ENCODE measurements at regions of chr6 and their contacts with region 1.

Region 1: DNA sequence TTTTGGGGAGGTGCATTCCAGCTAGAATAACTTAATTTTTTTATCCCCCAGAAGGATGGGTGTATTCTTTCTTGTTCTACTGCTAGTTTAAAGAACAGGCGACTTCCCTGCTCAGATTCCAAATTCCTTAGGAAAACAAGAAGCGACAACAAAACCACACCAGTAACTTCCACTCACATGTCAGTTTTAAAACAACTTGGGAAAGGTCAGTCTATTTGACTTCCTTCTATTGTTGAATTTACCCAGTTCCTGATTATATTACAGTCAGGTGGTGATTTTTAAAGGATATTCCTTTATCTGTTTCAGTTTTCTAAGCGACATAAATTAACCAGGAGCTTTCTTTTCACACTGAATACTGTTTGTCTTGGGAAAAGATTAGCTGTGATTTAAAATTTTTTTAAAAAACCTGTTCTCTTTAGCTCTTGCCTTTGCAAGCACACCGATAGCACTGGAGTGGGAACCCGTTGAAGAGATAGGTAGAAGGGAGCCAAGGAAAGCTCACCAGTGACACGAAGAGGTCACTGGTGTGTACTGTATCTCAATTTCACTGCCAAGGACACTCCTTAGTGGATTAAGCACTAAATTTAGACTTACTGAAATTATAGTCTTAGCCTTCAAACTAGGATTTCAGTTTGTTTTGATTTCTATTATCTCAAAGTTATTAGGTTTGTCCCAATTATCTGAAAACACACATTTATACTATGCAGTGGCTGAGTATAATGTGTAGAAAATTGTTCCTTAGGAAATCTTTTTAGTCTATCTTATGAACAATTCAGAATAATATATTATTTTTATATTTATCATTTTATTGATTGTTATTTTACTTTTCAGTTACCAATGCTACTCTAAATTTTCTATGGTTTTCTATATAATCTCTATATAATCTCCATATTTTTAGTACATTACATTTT is 22.3 kb downstream of the MARCKS start:
- DNase-seq: peak in 1 of 2 donors; percentile 54
- ATAC-seq: peak; percentile 91 to 100 (median 98)
- H3K4me3 ChIP-seq: peak overlapping the region in 5 of 10 donors; percentile 1 to 39 (median 14)
- H3K27ac ChIP-seq: peak overlapping the region in 8 of 10 donors; percentile 3 to 64 (median 38)
- H3K4me1 ChIP-seq: peaks cover 0 to 18% (median 7%) of the 10 kb centered on the region in 9 donors
- H3K27me3 ChIP-seq: no peaks in the 10 kb centered on the region
- CTCF ChIP-seq: peak; percentile 45 to 84 (median 72)

Region 2: DNA sequence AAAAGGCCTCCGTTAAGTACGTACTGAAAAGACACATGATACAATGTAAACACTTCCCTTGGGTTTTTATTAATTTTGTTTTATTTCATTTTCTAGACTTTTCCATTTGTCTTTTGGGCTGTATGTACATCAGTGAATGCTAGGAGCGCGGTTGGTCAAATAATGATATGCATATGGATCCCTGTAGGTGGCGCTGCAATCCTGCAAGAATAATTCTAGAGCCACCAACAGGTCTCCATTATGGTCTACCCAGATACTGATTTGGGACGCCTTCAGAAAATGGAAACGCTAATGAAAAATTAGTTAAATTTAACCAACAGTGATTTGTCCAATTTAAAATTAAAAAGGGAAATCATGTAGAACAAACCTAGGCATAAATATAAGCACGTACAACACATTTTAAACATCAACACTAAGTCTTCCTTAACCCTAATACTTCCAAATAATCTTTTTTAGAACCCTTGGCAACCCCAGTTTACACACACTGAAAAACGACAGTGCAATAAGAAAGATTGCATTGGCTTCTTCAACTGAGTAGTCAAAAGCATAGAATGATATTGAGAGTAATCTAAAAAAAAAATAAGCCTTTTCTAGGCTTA is 1098.8 kb before region 1 on chr6:
- intact Hi-C with region 1: loop called in 1 of 10 experiments (anchors 10 kb)
- DNase-seq: peak; percentile 20 to 83
- ATAC-seq: peak in 7 of 8 donors; percentile 81 to 96 (median 91)
- H3K4me3 ChIP-seq: no peak overlapping the region
- H3K27ac ChIP-seq: no peak overlapping the region
- H3K4me1 ChIP-seq: peaks cover 0 to 5% (median 0%) of the 10 kb centered on the region in 9 donors
- H3K27me3 ChIP-seq: no peaks in the 10 kb centered on the region
- CTCF ChIP-seq: peak; percentile 76 to 94 (median 86)

Measured in heart right ventricle (tissue), 16 donors.